Heart left ventricle (tissue), 16 donors: ENCODE measurements at regions of chr7 and their contacts with region 1.

Region 1: DNA sequence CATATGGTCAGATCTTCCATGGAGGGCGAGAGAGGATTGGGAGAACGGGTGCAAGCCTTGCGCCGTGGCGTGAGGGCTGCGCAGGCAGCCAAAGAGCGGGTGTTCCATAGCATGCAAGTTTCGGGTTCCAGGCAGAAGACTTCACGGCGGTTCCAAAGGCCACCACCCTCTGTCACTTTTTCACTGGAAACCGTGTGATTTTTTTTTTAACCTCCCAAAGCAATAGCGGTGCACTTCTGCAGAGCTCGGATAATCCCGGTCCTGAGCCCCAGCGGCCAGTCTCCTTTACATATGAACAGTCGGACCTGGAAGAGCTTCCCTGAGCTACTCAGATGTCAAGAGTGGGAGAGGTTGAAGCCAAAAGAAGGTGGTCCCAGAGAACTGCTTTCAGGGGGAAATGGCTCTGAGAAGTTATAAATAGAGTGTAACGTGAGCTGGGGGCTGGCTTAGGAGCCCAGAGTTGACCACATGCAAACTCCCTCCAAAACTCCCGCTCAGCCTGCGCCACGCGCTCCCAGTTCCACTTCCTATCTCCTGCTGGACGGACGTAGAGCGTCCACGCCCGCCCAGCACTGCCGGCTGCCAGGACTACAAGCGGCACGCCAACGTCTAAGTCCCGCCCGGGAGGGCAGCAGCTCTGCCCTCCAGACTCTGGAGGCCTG is at the start of gene MEOX2:
- DNase-seq: peak; percentile 90 to 91 (median 90)
- ATAC-seq: peak; percentile 86 to 95 (median 92)
- H3K4me3 ChIP-seq: peak within 1 kb of the TSS; percentile 45 to 80 (median 72)
- H3K27ac ChIP-seq: peak within 1 kb of the TSS; percentile 85 to 95 (median 90)
- H3K4me1 ChIP-seq: peaks cover 0 to 15% (median 0%) of the 10 kb centered on the region in 12 donors
- H3K27me3 ChIP-seq: peaks cover 0 to 25% (median 0%) of the 10 kb centered on the region in 9 donors
- CTCF ChIP-seq: peak in 1 of 12 donors; percentile 5
- POLR2A ChIP-seq: peak in 1 of 2 donors; percentile 88
- total RNA-seq, gene MEOX2: 5.0 to 17.1 (median 11.0) TPM

Region 2: DNA sequence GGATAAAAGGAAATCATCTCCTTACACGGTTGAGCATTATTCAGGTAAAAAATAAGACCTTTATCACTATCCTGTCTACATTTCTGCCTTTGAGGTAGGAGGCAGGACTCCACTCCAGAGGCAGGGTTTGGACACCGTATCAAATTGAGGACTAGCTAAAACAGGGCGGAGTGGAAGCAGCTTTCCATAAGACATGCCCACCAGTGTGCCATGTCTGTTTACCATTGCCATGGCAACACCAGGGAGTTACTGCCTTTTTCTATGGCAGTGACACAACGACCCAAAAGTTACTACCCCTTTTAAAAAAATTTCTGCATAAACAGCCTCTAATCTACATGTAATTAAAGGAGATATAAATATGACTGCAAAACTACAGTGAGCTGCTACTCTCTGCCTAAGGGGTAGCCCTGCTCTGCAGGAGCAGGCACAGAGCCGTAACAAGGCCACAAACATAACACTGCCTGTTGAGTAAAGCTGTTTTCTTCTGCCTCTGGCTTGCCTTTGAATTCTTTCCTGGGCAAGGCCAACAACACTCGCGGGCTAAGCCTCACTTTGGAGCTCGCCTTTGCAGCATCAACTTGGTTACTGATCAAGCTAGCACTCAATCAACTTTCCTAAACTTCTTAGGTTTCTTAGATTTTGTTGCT is 810.4 kb before region 1 on chr7:
- intact Hi-C with region 1: no loop called
- DNase-seq: no peak
- ATAC-seq: no peak
- H3K4me3 ChIP-seq: no peak overlapping the region
- H3K27ac ChIP-seq: no peak overlapping the region
- H3K4me1 ChIP-seq: no peaks in the 10 kb centered on the region
- H3K27me3 ChIP-seq: no peaks in the 10 kb centered on the region
- CTCF ChIP-seq: no peak
- POLR2A ChIP-seq: no peak

Region 3: GRCh38 chr7:14902589-14903067 is 783.8 kb before region 1 on chr7 and contains the start of gene DGKB:
- intact Hi-C with region 1: no loop called
- DNase-seq: peak; percentile 36 to 57 (median 40)
- ATAC-seq: peak; percentile 58 to 88 (median 81)
- H3K4me3 ChIP-seq: peak within 1 kb of the TSS; percentile 7 to 54 (median 45)
- H3K27ac ChIP-seq: peak within 1 kb of the TSS in 6 of 12 donors; percentile 11 to 49 (median 34)
- H3K4me1 ChIP-seq: peaks cover 0 to 6% (median 0%) of the 10 kb centered on the region in 12 donors
- H3K27me3 ChIP-seq: no peaks in the 10 kb centered on the region
- CTCF ChIP-seq: no peak
- POLR2A ChIP-seq: no peak
- total RNA-seq, gene DGKB: 0.22 to 1.6 (median 0.54) TPM in 8 of 9 donors, not detected in the other

Region 4: GRCh38 chr7:15508258-15508657 is 178.2 kb before region 1 on chr7:
- intact Hi-C with region 1: loop called in 1 of 10 experiments (anchors 5 kb)
- DNase-seq: no peak
- ATAC-seq: no peak
- H3K4me3 ChIP-seq: no peak overlapping the region
- H3K27ac ChIP-seq: no peak overlapping the region
- H3K4me1 ChIP-seq: peaks cover 0 to 23% (median 1%) of the 10 kb centered on the region in 12 donors
- H3K27me3 ChIP-seq: no peaks in the 10 kb centered on the region
- CTCF ChIP-seq: no peak
- POLR2A ChIP-seq: no peak

Region 5: DNA sequence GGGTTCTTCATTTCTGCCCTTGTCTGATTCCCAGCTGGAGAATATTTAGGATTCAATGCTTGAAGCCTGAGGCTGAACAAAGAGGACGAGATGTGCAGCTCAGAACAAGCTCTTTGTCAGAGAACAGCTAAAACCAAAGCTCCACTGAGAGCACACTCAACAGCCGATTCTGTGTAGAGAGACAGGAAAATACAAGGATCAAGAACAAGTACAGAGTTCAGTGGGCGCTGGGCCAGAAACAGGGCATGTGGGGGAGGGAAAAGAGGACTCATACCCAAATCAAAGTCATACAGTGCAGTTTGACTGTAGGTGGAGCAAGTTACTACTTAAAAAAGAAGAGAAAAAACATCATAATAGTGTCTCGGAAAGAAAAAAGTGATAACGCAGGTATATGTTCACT is 124.6 kb before region 1 on chr7 and contains the start of gene AGMO:
- intact Hi-C with region 1: loop called in 8 of 10 experiments (anchors 2 to 10 kb)
- DNase-seq: peak; percentile 69 to 79 (median 75)
- ATAC-seq: peak; percentile 61 to 87 (median 84)
- H3K4me3 ChIP-seq: peak within 1 kb of the TSS in 10 of 12 donors; percentile 3 to 51 (median 40)
- H3K27ac ChIP-seq: peak within 1 kb of the TSS; percentile 51 to 80 (median 70)
- H3K4me1 ChIP-seq: peaks cover 0 to 35% (median 1%) of the 10 kb centered on the region in 12 donors
- H3K27me3 ChIP-seq: no peaks in the 10 kb centered on the region
- CTCF ChIP-seq: peak in 6 of 12 donors; percentile 7 to 39 (median 16)
- POLR2A ChIP-seq: no peak
- total RNA-seq, gene AGMO: 0.21 to 0.66 (median 0.40) TPM in 8 of 9 donors, not detected in the other

Region 6: GRCh38 chr7:15778191-15778590 is 91.8 kb after region 1 on chr7:
- intact Hi-C with region 1: loop called in 1 of 10 experiments (anchors 10 kb)
- DNase-seq: no peak
- ATAC-seq: peak in 2 of 4 donors; percentile 26 to 78
- H3K4me3 ChIP-seq: no peak overlapping the region
- H3K27ac ChIP-seq: peak overlapping the region in 7 of 12 donors; percentile 2 to 46 (median 30)
- H3K4me1 ChIP-seq: peaks cover 0 to 16% (median 7%) of the 10 kb centered on the region in 12 donors
- H3K27me3 ChIP-seq: no peaks in the 10 kb centered on the region
- CTCF ChIP-seq: no peak
- POLR2A ChIP-seq: no peak

Region 7: DNA sequence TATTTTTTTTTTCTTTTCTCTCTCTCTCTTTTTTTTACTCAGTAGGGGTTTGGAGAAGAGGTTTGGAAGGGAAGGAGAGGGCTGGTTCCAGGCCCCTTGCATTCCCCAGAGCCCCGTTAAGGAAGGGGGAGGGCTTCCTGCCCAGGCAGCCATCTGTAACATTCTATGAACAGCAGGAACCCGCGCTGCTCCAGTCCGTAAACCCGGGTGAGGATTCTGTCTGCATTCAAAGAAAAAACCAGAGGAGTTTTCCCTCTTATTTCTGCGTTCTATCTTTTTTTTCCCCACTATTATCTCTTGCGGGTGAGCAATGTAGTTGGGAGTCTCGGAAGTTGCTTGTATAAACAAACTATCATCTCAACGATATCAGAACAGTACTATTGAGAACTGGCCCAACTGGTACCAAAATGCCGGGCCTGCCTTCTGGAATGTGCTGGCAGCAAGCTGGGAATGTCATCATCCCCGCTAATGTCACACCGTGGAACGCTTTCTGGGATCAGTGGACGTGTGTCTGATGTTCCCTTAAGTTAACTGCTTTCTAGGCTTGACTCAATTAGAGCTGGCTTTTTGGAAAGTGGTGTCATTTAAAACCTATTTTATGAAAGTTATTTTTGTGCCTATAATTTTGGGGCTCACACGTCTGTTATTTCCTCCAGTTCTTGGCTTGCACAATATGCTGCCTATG is 153.1 kb after region 1 on chr7:
- intact Hi-C with region 1: loop called in 5 of 10 experiments (anchors 2 to 10 kb)
- DNase-seq: peak; percentile 69 to 84 (median 81)
- ATAC-seq: peak; percentile 94 to 98 (median 96)
- H3K4me3 ChIP-seq: peak overlapping the region in 11 of 12 donors; percentile 4 to 54 (median 42)
- H3K27ac ChIP-seq: peak overlapping the region; percentile 18 to 89 (median 79)
- H3K4me1 ChIP-seq: peaks cover 0 to 37% (median 17%) of the 10 kb centered on the region in 12 donors
- H3K27me3 ChIP-seq: no peaks in the 10 kb centered on the region
- CTCF ChIP-seq: no peak
- POLR2A ChIP-seq: no peak

Region 8: GRCh38 chr7:16645593-16646471 is 959.4 kb after region 1 on chr7 and contains the starts of genes ANKMY2 and BZW2:
- intact Hi-C with region 1: loop called in 1 of 10 experiments (anchors 10 kb)
- DNase-seq: peak; percentile 96 to 98 (median 97)
- ATAC-seq: peak; percentile 95 to 96 (median 96)
- H3K4me3 ChIP-seq: peak within 1 kb of the TSS; percentile 71 to 97 (median 86)
- H3K27ac ChIP-seq: peak within 1 kb of the TSS; percentile 75 to 97 (median 94)
- H3K4me1 ChIP-seq: peaks cover 0 to 75% (median 53%) of the 10 kb centered on the region in 12 donors
- H3K27me3 ChIP-seq: no peaks in the 10 kb centered on the region
- CTCF ChIP-seq: peak in 6 of 12 donors; percentile 5 to 50 (median 24)
- POLR2A ChIP-seq: peak in 1 of 2 donors; percentile 98
- total RNA-seq, gene ANKMY2: 17.7 to 44.3 (median 28.3) TPM
- total RNA-seq, gene BZW2: 195 to 808 (median 308) TPM